ENCODE measurements at regions of chr5 and their contacts with region 1.

Region 1: GRCh38 chr5:179060116-179061008 is at the start of gene ZNF354C:
- DNase-seq: peak; percentile 80
- H3K4me3 ChIP-seq: peak within 1 kb of the TSS; percentile 61 to 77 (median 75)
- H3K27ac ChIP-seq: peak within 1 kb of the TSS; percentile 11
- H3K4me1 ChIP-seq: peaks cover 6% of the 10 kb centered on the region
- H3K27me3 ChIP-seq: no peaks in the 10 kb centered on the region
- CTCF ChIP-seq: no peak
- total RNA-seq, gene ZNF354C: 5.3 to 6.8 TPM

Region 2: GRCh38 chr5:179023528-179024430 is 36.6 kb before region 1 on chr5 and contains the start of gene ZNF879:
- CTCF ChIA-PET with region 1: no interaction called
- dilution Hi-C with region 1: no loop called
- in situ Hi-C with region 1: no loop called
- intact Hi-C with region 1: loop called (anchors 1 kb)
- DNase-seq: peak; percentile 92
- H3K4me3 ChIP-seq: peak within 1 kb of the TSS; percentile 59 to 68 (median 63)
- H3K27ac ChIP-seq: peak within 1 kb of the TSS; percentile 1
- H3K4me1 ChIP-seq: no peaks in the 10 kb centered on the region
- H3K27me3 ChIP-seq: no peaks in the 10 kb centered on the region
- CTCF ChIP-seq: no peak
- total RNA-seq, gene ZNF879: 2.6 to 3.8 TPM

Region 3: DNA sequence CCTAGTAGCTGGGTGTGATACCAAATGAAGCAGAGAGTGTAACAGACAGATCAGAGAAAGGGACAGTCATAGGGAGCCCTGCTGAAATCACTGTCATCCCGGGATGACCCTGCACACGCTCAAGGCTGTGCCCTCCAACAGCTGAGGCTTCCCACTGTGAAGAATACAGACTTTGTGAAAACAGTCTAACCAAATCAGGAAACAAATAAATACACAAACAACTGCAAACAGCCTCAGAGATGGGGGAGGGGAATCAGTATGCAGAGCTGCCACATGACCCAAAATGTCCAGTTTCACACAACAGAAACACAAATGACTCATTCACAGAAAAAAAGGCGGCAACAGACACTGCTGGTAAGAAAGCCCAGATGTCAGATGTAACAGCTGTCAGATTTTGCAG is 183.0 kb after region 1 on chr5:
- CTCF ChIA-PET with region 1: no interaction called
- dilution Hi-C with region 1: no loop called
- in situ Hi-C with region 1: no loop called
- intact Hi-C with region 1: no loop called
- DNase-seq: no peak
- H3K4me3 ChIP-seq: no peak overlapping the region
- H3K27ac ChIP-seq: no peak overlapping the region
- H3K4me1 ChIP-seq: no peaks in the 10 kb centered on the region
- H3K27me3 ChIP-seq: no peaks in the 10 kb centered on the region
- CTCF ChIP-seq: no peak

Region 4: GRCh38 chr5:179495906-179496455 is 435.6 kb after region 1 on chr5:
- CTCF ChIA-PET with region 1: no interaction called
- dilution Hi-C with region 1: no loop called
- in situ Hi-C with region 1: no loop called
- intact Hi-C with region 1: loop called (anchors 5 kb)
- DNase-seq: no peak
- H3K4me3 ChIP-seq: no peak overlapping the region
- H3K27ac ChIP-seq: no peak overlapping the region
- H3K4me1 ChIP-seq: no peaks in the 10 kb centered on the region
- H3K27me3 ChIP-seq: no peaks in the 10 kb centered on the region
- CTCF ChIP-seq: peak in 1 of 2 donors; percentile 26

Region 5: DNA sequence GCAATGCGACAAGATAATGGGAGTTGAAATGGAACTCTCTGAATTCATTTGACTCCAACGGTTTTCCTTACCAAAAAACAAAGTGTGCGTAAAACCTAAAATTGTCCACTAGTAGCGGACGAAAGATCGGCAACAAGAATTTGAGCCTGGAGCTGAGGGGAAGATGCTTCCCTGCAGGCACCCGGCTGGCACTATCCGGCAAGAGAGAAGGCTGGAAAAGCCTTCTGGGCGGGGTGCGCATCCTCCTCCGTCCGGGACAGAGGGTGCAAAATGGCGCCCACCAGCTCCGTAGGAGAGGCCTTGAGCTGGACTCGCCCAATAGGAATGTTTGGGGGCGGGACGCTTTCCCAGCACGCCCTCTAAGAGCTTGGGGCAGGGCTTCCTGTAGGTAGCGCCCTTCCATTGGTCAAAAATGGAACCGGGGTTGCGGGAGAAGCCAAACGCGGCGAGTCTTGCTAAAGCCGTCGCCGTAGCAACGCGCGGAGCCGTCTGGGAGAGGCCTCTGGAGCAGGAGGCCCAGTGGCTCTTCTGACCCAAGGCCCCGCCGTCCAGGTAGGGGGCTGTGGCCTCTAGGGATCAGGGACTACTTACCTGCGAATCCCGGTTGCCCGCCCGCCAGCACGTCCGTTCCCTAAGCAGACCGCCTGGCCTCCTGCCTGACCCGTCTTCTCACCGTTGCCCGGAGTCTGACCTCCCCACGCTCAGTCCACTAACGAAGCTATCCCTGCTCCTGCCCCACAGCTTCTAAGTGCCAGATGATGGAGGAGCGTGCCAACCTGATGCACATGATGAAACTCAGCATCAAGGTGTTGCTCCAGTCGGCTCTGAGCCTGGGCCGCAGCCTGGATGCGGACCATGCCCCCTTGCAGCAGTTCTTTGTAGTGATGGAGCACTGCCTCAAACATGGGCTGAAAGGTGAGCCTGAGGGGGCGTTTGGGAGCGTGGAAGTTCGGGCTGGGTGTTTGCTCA is 499.2 kb after region 1 on chr5:
- CTCF ChIA-PET with region 1: no interaction called
- dilution Hi-C with region 1: no loop called
- in situ Hi-C with region 1: no loop called
- intact Hi-C with region 1: loop called (anchors 10 kb)
- DNase-seq: peak; percentile 98
- H3K4me3 ChIP-seq: peak overlapping the region; percentile 70 to 95 (median 83)
- H3K27ac ChIP-seq: peak overlapping the region; percentile 76
- H3K4me1 ChIP-seq: peaks cover 13% of the 10 kb centered on the region
- H3K27me3 ChIP-seq: no peaks in the 10 kb centered on the region
- CTCF ChIP-seq: no peak